Naive thymus-derived CD4-positive, alpha-beta T cell (primary cell): ENCODE measurements at regions of chr12 and their contacts with region 1.

Region 1: DNA sequence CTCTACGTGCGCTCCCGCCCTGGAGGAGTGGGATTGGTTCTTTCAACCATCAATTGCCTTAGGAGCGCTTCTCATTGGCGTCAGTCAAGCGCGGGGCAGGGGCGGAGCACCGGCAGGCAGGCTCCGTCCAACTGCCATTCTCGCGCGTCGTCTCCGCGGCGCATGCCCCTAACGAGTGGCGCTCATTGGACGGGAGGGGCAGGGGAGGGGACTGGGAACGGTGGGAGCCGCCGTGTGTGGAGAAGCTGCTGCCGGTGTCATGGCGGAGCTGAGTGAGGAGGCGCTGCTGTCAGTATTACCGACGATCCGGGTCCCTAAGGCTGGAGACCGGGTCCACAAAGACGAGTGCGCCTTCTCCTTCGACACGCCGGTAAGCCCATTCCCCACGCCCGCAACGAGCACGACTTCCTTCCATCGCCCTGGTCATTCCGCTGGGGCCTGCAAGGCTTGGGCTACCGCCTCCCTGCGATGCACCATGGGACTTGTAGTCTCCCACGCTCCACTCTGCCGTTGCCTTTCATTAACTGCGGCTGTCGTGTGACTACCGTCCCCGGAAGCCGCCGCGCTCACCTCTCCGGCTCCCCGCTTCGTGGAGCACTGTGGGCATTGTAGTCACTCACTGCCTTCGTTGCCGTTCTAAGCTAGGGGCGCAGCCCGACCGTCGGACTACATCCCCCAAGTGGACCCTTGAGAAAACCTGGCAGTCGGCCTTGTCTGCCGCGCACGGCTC is at the start of gene USP5:
- DNase-seq: peak; percentile 87 to 100 (median 99)
- ATAC-seq: peak; percentile 87
- H3K4me3 ChIP-seq: peak within 1 kb of the TSS; percentile 87
- H3K4me3 Mint-ChIP-seq: peak within 1 kb of the TSS; percentile 89 to 100 (median 94)
- H3K27ac ChIP-seq: peak within 1 kb of the TSS; percentile 85
- H3K27ac Mint-ChIP-seq: peak within 1 kb of the TSS; percentile 89 to 99 (median 97)
- H3K4me1 ChIP-seq: peaks cover 16 to 18% of the 10 kb centered on the region in 2 donors
- H3K4me1 Mint-ChIP-seq: peaks cover 12 to 38% (median 28%) of the 10 kb centered on the region in 7 donors
- H3K27me3 ChIP-seq: no peaks in the 10 kb centered on the region
- H3K27me3 Mint-ChIP-seq: no peaks in the 10 kb centered on the region
- total RNA-seq, gene USP5: 58.0 to 134 (median 71.1) TPM

Region 2: GRCh38 chr12:6563448-6564050 is 288.5 kb before region 1 on chr12:
- CTCF ChIA-PET with region 1: no interaction called
- POLR2A ChIA-PET with region 1: no interaction called
- intact Hi-C with region 1: loop called in 1 of 2 experiments (anchors 1 kb)
- DNase-seq: peak; percentile 36 to 68 (median 52)
- ATAC-seq: peak; percentile 43
- H3K4me3 ChIP-seq: no peak overlapping the region
- H3K4me3 Mint-ChIP-seq: peak overlapping the region in 2 of 10 donors; percentile 6 to 55
- H3K27ac ChIP-seq: no peak overlapping the region
- H3K27ac Mint-ChIP-seq: peak overlapping the region in 7 of 9 donors; percentile 9 to 86 (median 78)
- H3K4me1 ChIP-seq: peaks cover 8 to 14% of the 10 kb centered on the region in 2 donors
- H3K4me1 Mint-ChIP-seq: peaks cover 22 to 54% (median 41%) of the 10 kb centered on the region in 7 donors
- H3K27me3 ChIP-seq: no peaks in the 10 kb centered on the region
- H3K27me3 Mint-ChIP-seq: no peaks in the 10 kb centered on the region

Region 3: DNA sequence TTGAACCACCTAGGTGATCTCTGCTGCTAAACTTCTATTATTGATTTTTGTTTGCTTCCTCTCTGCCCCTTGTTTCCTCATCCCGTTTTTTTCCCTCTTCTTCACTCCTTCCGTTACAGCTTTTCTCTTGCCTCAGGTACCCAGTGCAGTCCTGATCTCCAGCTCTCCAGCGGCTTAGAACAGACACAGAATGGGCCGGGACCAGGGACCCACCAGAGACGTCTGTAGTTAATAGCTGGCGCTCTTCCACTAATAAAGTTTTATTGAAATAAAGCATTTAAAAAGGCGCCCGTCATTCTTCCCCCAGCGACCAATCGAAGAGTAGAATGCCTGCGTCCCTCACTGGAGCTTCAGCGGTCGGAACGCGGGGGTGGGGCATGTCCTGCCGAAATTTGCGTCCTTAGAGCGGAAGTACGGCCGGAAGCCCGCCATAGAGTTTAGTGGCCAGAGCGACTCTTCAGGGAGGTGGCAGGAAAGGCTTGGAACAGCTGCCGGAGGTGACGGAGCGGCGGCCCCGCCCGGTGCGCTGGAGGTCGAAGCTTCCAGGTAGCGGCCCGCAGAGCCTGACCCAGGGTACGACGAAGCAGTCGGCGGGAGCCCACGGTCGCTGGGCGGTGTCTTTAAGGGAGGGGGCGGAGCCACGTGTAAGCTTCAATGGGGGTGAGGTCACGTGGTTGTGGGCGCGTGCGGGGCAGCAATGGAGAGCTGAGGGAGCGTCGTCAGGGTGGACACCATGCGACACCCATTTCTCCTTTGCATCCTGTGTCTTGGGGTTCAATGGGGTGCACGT is 128.3 kb before region 1 on chr12 and contains the start of gene COPS7A:
- CTCF ChIA-PET with region 1: interaction called, 7 read pairs
- POLR2A ChIA-PET with region 1: interaction called, 20 read pairs
- intact Hi-C with region 1: loop called (anchors 1 kb)
- DNase-seq: peak; percentile 77 to 94 (median 90)
- ATAC-seq: peak; percentile 93
- H3K4me3 ChIP-seq: peak within 1 kb of the TSS; percentile 63
- H3K4me3 Mint-ChIP-seq: peak within 1 kb of the TSS; percentile 80 to 97 (median 92)
- H3K27ac ChIP-seq: peak within 1 kb of the TSS; percentile 75
- H3K27ac Mint-ChIP-seq: peak within 1 kb of the TSS; percentile 90 to 98 (median 96)
- H3K4me1 ChIP-seq: peaks cover 10 to 11% of the 10 kb centered on the region in 2 donors
- H3K4me1 Mint-ChIP-seq: peaks cover 24 to 34% (median 27%) of the 10 kb centered on the region in 7 donors
- H3K27me3 ChIP-seq: no peaks in the 10 kb centered on the region
- H3K27me3 Mint-ChIP-seq: no peaks in the 10 kb centered on the region
- total RNA-seq, gene COPS7A: 21.9 to 38.7 (median 30.1) TPM

Region 4: GRCh38 chr12:6833189-6833890 is 18.7 kb before region 1 on chr12:
- CTCF ChIA-PET with region 1: interaction called, 8 read pairs
- POLR2A ChIA-PET with region 1: interaction called, 39 read pairs
- intact Hi-C with region 1: loop called in 1 of 2 experiments (anchors 1 kb)
- DNase-seq: no peak
- ATAC-seq: no peak
- H3K4me3 ChIP-seq: no peak overlapping the region
- H3K4me3 Mint-ChIP-seq: no peak overlapping the region
- H3K27ac ChIP-seq: no peak overlapping the region
- H3K27ac Mint-ChIP-seq: no peak overlapping the region
- H3K4me1 ChIP-seq: peaks cover 0 to 4% of the 10 kb centered on the region in 2 donors
- H3K4me1 Mint-ChIP-seq: peaks cover 0 to 16% (median 12%) of the 10 kb centered on the region in 7 donors
- H3K27me3 ChIP-seq: peaks cover 0 to 4% of the 10 kb centered on the region in 2 donors
- H3K27me3 Mint-ChIP-seq: peaks cover 0 to 32% (median 0%) of the 10 kb centered on the region in 5 donors

Region 5: DNA sequence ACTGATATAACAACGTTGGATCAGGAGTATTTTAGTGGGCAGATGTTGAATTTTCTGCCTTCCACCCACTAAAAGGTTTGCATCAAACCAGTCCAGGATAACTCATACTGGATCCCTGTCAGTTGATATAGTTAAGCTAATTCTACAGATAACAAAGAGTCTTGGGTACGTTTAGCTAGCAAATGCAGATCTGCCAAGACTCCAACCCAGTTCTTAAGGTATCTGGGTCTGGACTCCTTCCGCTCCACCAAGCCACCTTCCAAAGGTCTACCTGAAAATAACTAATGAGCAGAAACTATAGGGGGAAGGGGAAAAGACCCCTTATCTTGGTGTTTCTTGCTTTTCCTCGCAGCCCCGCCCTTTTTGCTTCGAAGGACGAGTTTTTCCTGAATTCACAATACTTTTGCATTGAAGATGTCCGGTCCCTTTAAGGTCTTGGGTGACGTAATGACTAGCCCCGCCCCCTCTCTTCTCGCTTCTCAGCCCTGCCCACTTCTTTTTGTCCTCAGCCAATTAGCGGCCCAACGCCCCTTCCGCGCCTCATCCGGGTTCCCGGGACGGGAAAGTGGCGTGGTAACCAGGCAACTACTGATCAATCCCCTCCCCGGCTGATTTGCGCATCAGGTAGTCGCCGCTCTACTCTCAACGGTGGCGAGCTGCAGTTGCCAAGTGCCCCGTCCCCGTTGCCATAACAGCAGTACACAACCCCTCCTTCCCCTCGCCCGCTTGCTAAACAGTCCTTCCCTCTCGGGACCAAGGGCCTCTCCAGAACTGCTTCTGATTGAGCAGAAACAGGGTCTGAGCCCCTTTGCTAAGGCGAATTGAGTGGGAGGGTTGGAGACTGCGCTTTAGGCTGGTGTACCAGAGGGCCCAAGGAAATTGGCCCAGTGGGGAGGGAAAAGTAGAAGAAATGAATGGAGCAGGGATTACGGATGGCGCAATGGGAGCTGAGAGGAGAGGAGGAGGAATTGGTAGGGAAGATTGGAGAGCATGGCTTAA is 52.5 kb after region 1 on chr12 and contains the start of gene LRRC23:
- CTCF ChIA-PET with region 1: no interaction called
- POLR2A ChIA-PET with region 1: interaction called, 3 read pairs
- intact Hi-C with region 1: loop called (anchors 1 kb)
- DNase-seq: peak; percentile 89 to 98 (median 95)
- ATAC-seq: peak; percentile 98
- H3K4me3 ChIP-seq: peak within 1 kb of the TSS; percentile 75
- H3K4me3 Mint-ChIP-seq: peak within 1 kb of the TSS in 1 of 10 donors; percentile 8
- H3K27ac ChIP-seq: peak within 1 kb of the TSS; percentile 93
- H3K27ac Mint-ChIP-seq: peak within 1 kb of the TSS in 1 of 9 donors; percentile 78
- H3K4me1 ChIP-seq: peaks cover 14 to 17% of the 10 kb centered on the region in 2 donors
- H3K4me1 Mint-ChIP-seq: peaks cover 0 to 10% (median 3%) of the 10 kb centered on the region in 7 donors
- H3K27me3 ChIP-seq: no peaks in the 10 kb centered on the region
- H3K27me3 Mint-ChIP-seq: no peaks in the 10 kb centered on the region
- total RNA-seq, gene LRRC23: 6.6 to 12.1 (median 7.3) TPM

Region 6: GRCh38 chr12:6965026-6965661 is 113.1 kb after region 1 on chr12:
- CTCF ChIA-PET with region 1: no interaction called
- POLR2A ChIA-PET with region 1: interaction called, 12 read pairs
- intact Hi-C with region 1: loop called (anchors 1 kb)
- DNase-seq: peak; percentile 77 to 89 (median 85)
- ATAC-seq: peak; percentile 69
- H3K4me3 ChIP-seq: no peak overlapping the region
- H3K4me3 Mint-ChIP-seq: peak overlapping the region in 3 of 10 donors; percentile 9 to 23 (median 17)
- H3K27ac ChIP-seq: peak overlapping the region; percentile 68
- H3K27ac Mint-ChIP-seq: peak overlapping the region; percentile 75 to 95 (median 87)
- H3K4me1 ChIP-seq: peaks cover 45 to 60% of the 10 kb centered on the region in 2 donors
- H3K4me1 Mint-ChIP-seq: peaks cover 33 to 59% (median 56%) of the 10 kb centered on the region in 7 donors
- H3K27me3 ChIP-seq: no peaks in the 10 kb centered on the region
- H3K27me3 Mint-ChIP-seq: no peaks in the 10 kb centered on the region

Region 7: GRCh38 chr12:6987948-6988553 is 136.0 kb after region 1 on chr12:
- CTCF ChIA-PET with region 1: no interaction called
- POLR2A ChIA-PET with region 1: no interaction called
- intact Hi-C with region 1: no loop called
- DNase-seq: no peak
- ATAC-seq: no peak
- H3K4me3 ChIP-seq: no peak overlapping the region
- H3K4me3 Mint-ChIP-seq: no peak overlapping the region
- H3K27ac ChIP-seq: no peak overlapping the region
- H3K27ac Mint-ChIP-seq: peak overlapping the region in 1 of 9 donors; percentile 20
- H3K4me1 ChIP-seq: no peaks in the 10 kb centered on the region
- H3K4me1 Mint-ChIP-seq: peaks cover 0 to 5% (median 2%) of the 10 kb centered on the region in 7 donors
- H3K27me3 ChIP-seq: no peaks in the 10 kb centered on the region
- H3K27me3 Mint-ChIP-seq: no peaks in the 10 kb centered on the region